ENCODE measurements at regions of chr4 and their contacts with region 1.

Region 1: GRCh38 chr4:180794333-180794732 is 1448.9 kb upstream of the TENM3 start:
- DNase-seq: no peak
- H3K4me3 Mint-ChIP-seq: no peak overlapping the region
- H3K27ac Mint-ChIP-seq: no peak overlapping the region
- H3K4me1 Mint-ChIP-seq: no peaks in the 10 kb centered on the region
- H3K27me3 Mint-ChIP-seq: no peaks in the 10 kb centered on the region
- CTCF ChIP-seq: no peak

Region 2: GRCh38 chr4:180770265-180770664 is 24.1 kb before region 1 on chr4:
- CTCF ChIA-PET with region 1: no interaction called
- POLR2A ChIA-PET with region 1: no interaction called
- intact Hi-C with region 1: loop called (anchors 2 kb)
- DNase-seq: no peak
- H3K4me3 Mint-ChIP-seq: no peak overlapping the region
- H3K27ac Mint-ChIP-seq: no peak overlapping the region
- H3K4me1 Mint-ChIP-seq: peaks cover 8% of the 10 kb centered on the region
- H3K27me3 Mint-ChIP-seq: no peaks in the 10 kb centered on the region
- CTCF ChIP-seq: no peak

Region 3: DNA sequence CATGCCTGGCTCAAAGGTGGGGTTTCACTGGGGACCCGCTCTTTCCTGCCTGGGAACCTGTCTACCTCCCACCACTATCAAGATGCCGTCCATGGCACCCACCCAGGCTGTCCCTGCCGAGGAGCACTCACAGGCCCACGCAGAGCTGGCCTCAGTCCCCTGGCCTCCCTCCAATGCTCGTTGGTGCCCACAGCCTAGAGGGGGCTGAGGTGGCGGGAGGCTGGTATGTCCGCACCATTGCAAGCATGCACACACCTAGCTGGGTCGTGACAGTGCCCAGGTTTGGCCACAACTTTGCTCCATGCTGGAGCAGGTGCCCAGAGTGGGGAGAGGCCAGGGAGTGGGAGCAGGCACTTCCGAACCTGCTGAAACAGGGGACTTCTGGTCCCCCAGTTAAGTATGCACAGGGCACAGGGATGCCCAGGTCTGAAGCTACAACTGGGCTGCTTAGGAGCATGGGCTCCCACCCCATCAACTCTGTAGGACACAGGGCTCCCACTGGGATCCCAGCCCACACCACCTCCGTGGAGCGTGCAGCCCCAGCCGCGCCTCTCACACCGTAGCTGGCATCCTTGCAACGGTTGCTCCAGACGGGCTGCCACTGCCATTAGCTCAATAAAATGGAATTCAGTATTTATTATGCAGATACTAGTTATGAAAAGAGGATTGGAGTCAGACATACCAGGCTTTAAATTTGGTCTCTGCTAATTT is 72.8 kb after region 1 on chr4:
- CTCF ChIA-PET with region 1: no interaction called
- POLR2A ChIA-PET with region 1: no interaction called
- intact Hi-C with region 1: no loop called
- DNase-seq: no peak
- H3K4me3 Mint-ChIP-seq: no peak overlapping the region
- H3K27ac Mint-ChIP-seq: no peak overlapping the region
- H3K4me1 Mint-ChIP-seq: no peaks in the 10 kb centered on the region
- H3K27me3 Mint-ChIP-seq: no peaks in the 10 kb centered on the region
- CTCF ChIP-seq: no peak

Measured in MCF 10A (cell line).